OCI-LY7 (cell line): ENCODE measurements at regions of chr19 and their contacts with region 1.

Region 1: DNA sequence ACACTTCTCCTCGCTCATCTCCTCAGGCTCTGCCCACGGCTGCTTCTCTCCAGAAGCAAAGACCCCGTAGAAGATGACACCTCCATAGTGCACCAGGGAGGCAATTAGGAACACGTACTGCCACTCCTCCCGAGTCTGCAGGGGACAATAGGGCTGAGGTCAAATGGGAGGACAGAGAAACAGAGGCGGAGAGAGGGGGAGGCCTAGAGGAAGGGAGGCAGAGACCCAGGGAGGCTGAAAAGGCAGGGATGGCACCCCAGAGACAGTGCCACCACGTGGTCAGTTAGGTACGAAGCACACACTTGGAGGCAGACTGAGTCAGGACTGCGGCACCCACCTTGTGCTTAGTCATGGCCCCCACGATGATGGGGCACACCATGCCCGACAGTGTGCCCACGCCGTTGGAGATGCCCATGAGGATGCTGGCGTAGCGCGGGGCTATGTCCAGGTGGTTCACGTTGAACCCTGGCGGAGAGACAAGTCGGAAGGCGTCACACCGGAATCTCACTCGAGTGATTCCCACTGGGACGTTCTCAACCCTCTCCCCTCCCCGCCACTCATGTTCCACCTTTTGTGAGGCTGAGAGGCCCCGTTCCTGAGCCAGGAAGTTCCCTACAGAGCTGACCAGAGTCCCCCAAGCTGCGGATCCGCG is 5.6 kb downstream of the GFY start:
- DNase-seq: peak; percentile 79
- H3K4me3 ChIP-seq: no peak overlapping the region
- H3K27ac ChIP-seq: no peak overlapping the region
- H3K4me1 ChIP-seq: peaks cover 41% of the 10 kb centered on the region
- CTCF ChIP-seq: peak; percentile 75

Region 2: DNA sequence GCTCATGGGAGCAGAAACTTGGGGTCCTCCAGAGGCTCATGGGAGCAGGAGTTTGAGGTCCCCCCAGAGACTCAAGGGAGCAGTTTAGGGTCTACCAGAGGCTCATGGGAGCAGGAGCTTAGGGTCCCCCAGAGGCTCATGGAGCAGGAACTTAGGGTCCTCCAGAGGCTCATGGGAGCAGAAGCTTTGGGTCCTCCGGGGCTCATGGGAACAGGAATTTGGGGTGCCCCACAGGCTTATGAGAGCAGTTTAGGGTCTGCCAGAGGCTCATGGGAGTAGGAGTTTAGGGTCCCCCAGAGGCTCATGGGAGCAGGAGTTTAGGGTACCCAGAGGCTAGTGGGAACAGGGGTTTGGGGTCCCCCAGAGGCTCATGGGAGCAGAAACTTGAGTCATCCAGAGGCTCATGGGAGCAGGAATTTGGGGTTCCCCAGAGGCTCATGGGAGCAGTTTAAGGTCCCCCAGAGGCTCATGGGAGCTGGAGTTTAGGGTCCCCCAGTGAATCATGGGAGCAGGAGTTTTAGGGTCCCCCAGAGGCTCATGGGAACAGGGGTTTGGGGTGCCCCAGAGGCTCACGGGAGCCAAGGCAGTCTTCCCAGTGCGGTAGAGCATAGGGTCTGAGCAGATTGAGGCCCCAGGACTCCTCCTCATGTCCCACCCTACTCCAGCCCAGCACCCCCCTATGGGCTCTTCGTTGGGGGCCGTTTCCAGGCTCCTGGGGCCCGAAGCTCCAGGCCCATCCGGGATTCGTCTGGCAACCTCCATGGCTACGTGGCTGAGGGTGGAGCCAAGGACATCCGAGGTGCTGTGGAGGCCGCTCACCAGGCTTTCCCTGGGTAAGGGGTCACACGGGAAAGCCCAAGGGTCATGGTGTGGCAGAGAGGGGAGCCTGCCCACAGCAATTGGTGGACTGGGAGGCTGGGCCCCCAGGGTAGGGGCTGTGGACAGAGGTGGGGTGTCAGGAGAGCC is 34.6 kb after region 1 on chr19:
- CTCF ChIA-PET with region 1: no interaction called
- POLR2A ChIA-PET with region 1: interaction called, 10 read pairs
- intact Hi-C with region 1: no loop called
- DNase-seq: no peak
- H3K4me3 ChIP-seq: no peak overlapping the region
- H3K27ac ChIP-seq: no peak overlapping the region
- H3K4me1 ChIP-seq: peaks cover 15% of the 10 kb centered on the region
- CTCF ChIP-seq: no peak

Region 3: GRCh38 chr19:49690656-49691242 is 259.9 kb after region 1 on chr19 and contains the start of gene CPT1C:
- CTCF ChIA-PET with region 1: no interaction called
- POLR2A ChIA-PET with region 1: no interaction called
- intact Hi-C with region 1: no loop called
- DNase-seq: no peak
- H3K4me3 ChIP-seq: no peak within 1 kb of the TSS
- H3K27ac ChIP-seq: no peak within 1 kb of the TSS
- H3K4me1 ChIP-seq: peaks cover 5% of the 10 kb centered on the region
- CTCF ChIP-seq: no peak
- total RNA-seq, gene CPT1C: 0.23 and 0.95 TPM in 2 replicates